Posterior cingulate gyrus (tissue), 11 donors: ENCODE measurements at regions of chr4 and their contacts with region 1.

Region 1: GRCh38 chr4:38179690-38180377 is 219.6 kb downstream of the PTTG2 start:
- DNase-seq: peak; percentile 48 to 96 (median 82)

Region 2: GRCh38 chr4:37864786-37865185 is 315.0 kb before region 1 on chr4:
- intact Hi-C with region 1: no loop called
- DNase-seq: no peak

Region 3: DNA sequence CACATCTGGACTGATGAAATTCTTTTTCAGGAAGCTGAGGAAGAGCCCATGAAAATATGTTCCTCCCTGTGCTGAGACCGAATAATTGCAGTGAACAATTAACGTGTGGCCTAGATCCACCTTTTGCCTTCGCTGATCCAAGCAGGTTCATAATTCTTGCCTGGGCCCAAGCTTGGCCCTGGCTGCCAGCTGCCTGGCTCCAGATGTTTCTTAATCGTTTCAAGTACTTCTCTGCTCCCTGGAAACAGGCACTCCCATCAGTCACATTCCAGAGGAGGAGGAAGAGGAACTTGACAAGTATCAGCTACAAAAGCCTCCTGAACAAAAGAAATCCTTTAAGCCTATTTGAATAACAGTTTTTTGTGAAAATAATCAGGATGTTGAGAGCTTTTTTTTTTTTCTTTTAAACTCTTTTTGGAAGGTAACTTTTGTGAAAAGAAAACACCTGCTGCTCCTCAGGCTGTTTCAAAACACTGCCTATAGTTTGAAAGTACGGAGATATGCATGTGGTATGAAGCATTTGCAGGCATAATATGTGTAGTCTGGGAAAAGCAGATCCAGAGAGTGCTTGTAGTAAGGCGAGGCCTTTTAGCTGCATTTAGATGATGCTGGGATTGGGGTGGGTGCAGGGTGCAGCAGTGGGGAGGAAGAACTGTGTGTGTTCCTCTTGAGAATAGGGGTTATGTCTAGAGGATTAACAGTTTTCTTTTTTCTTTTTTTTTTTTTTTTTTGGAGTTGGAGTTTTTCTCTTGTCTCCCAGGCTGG is 65.3 kb before region 1 on chr4:
- intact Hi-C with region 1: no loop called
- DNase-seq: no peak

Region 4: GRCh38 chr4:38319456-38320342 is 139.9 kb after region 1 on chr4:
- intact Hi-C with region 1: loop called (anchors 5 kb)
- DNase-seq: peak; percentile 72 to 99 (median 92)

Region 5: DNA sequence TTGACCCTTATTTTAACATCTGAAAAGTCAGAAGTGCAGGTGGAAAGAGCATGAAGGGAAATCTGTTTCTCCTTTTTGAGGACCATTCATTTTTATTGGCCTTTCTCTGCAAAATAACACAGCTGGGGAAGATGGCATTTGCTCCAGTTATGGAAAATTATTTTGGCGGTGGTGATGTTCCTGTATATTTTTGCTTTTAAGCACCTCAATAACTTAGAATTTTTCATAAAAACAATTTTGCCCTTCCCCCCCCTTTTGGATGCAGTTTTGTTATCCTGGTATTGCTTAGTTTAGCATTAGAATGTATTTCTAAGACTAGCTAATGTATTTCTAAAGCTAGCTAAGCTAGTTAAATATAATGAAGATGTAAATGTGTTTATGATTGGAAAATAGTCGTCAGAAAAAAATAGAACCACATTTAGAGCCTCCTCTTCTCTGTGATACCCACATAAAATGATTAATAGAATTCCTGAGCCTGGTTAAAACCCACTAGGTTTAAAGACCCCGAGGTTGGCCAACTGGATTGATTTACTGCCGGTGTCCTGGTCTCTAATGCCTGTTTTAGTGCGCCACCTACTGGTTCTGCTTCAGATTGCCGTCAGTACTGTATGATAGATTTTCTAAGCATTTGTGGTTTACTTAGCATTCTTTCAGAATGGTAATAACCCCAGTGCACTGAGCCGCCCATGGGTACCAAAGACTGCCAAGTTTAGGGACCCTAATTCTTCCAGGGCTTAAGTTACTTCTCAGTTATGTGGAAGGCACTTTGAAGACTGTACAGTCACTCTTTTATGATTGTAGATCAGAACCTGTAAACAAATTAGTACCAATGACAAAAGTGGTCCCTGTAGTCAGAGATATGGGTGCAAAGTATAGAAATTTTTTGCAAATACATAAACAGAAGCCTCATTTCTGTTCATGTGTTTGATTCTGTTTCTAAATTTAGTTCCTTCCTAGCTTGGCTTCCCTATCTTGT is 495.6 kb after region 1 on chr4:
- intact Hi-C with region 1: loop called (anchors 1 kb)
- DNase-seq: peak in 8 of 10 donors; percentile 49 to 93 (median 82)

Region 6: DNA sequence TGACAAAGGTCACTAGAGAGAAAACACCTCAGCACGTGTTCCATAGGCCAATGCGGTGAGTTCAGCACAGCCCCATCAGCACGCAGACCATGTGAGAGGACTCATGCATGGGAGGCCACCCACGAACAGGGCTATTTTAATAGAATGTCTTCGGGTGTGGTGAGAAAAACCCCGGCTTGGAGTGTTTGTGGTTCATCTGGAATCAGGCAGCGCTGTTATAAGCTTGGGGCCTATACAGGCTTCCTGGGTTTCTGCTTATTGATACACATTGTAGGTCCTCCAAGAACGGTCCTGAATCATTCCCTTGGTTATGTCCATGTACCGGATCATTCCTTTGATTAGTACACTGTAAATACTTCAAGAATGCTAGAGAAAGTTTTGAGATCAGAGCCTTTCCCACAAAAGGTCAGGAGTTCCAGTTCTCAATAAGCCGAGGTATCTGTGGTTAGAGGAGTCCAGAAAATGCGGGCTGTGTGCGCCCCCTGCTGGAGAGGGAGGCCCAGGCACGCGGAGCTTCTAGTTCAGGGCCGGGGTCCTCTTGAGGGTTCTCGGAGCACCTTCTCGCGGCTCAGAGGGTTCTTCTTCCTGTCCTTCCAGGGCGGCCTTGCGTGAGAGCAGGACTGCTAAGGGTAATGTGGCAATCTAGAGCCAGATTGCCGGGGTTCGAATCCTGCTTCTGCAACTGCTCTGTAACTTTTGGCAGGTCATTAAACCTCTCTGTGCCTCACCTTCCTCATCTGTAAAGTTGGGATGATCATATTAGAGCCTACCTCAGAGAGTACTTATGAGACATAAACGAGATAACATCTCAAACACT is 551.2 kb after region 1 on chr4:
- intact Hi-C with region 1: loop called (anchors 2 kb)
- DNase-seq: peak; percentile 31 to 96 (median 82)

Region 7: DNA sequence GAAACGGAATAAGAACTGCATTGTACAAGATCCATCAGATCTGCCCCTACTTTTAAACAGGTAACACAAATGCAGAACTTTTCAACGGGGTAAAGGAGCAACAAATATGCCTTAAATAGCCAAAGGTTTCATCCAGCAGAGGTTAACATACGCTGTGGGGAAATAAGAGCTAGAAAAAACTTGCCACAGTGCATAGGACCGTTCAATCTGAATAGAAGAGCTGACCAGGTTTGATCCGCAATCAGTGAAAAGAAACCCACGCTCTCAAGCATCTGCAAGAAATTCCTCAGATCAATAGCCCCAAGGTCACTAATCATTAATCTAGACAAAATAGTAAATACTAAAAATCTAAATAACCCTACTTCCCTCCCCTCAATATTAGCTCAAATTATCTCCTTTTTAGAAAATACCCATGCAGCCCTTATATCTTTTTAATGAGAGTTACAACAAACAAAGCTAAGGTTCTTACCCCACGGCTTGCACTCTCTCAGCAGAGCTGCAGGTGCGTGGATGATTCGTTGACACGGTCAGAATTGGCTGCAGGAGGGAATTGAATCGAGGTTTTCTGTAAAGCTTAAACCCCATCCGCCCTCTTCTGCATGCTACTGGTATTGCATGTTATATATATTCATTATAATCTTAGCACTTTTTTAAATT is 602.7 kb after region 1 on chr4 and contains the start of gene TLR10:
- intact Hi-C with region 1: loop called (anchors 2 kb)
- DNase-seq: peak in 1 of 10 donors; percentile 34